ENCODE measurements at regions of chr6 and their contacts with region 1.

Region 1: GRCh38 chr6:156848533-156848932 is 71.4 kb downstream of the ARID1B start:
- DNase-seq: peak; percentile 85 to 91 (median 88)
- ATAC-seq: peak; percentile 82 to 91 (median 84)
- H3K4me3 ChIP-seq: peak overlapping the region in 4 of 12 donors; percentile 1 to 15 (median 8)
- H3K27ac ChIP-seq: peak overlapping the region; percentile 7 to 77 (median 64)
- H3K4me1 ChIP-seq: peaks cover 16 to 100% (median 90%) of the 10 kb centered on the region in 12 donors
- H3K27me3 ChIP-seq: no peaks in the 10 kb centered on the region
- CTCF ChIP-seq: no peak
- POLR2A ChIP-seq: no peak

Region 2: DNA sequence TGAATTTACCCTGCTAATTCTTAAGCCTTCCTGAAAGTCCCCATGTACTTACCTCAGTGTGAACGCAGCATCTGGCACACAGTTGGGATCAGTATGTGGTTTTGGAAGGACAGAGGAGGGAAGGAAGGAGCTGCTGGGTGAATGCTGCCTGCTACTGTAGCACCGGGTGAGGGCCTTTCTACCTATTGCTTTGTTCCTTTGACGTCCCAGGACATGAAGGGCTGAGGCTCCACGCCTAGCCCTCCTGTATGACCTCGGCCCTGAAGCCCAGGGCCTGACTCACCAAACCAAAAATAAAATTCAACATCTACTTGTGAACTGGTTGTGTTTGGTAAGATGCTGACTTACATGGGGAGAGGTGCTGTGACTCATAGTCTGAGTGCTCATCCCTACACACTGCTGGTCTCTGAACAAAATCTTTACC is 20.2 kb before region 1 on chr6:
- intact Hi-C with region 1: loop called in 1 of 10 experiments (anchors 2 kb)
- DNase-seq: peak in 2 of 5 donors; percentile 39 to 62
- ATAC-seq: peak; percentile 78 to 93 (median 86)
- H3K4me3 ChIP-seq: no peak overlapping the region
- H3K27ac ChIP-seq: peak overlapping the region; percentile 24 to 76 (median 60)
- H3K4me1 ChIP-seq: peaks cover 0 to 85% (median 59%) of the 10 kb centered on the region in 12 donors
- H3K27me3 ChIP-seq: no peaks in the 10 kb centered on the region
- CTCF ChIP-seq: no peak
- POLR2A ChIP-seq: no peak

Region 3: GRCh38 chr6:156886409-156886808 is 37.9 kb after region 1 on chr6:
- intact Hi-C with region 1: loop called in 1 of 10 experiments (anchors 5 kb)
- DNase-seq: peak in 3 of 5 donors; percentile 42 to 54 (median 45)
- ATAC-seq: peak; percentile 29 to 72 (median 66)
- H3K4me3 ChIP-seq: no peak overlapping the region
- H3K27ac ChIP-seq: peak overlapping the region in 11 of 12 donors; percentile 6 to 54 (median 30)
- H3K4me1 ChIP-seq: peaks cover 8 to 93% (median 75%) of the 10 kb centered on the region in 12 donors
- H3K27me3 ChIP-seq: no peaks in the 10 kb centered on the region
- CTCF ChIP-seq: no peak
- POLR2A ChIP-seq: no peak

Region 4: GRCh38 chr6:157158897-157159296 is 310.4 kb after region 1 on chr6:
- intact Hi-C with region 1: no loop called
- DNase-seq: no peak
- ATAC-seq: peak in 1 of 4 donors; percentile 34
- H3K4me3 ChIP-seq: no peak overlapping the region
- H3K27ac ChIP-seq: no peak overlapping the region
- H3K4me1 ChIP-seq: peaks cover 0 to 21% (median 1%) of the 10 kb centered on the region in 12 donors
- H3K27me3 ChIP-seq: no peaks in the 10 kb centered on the region
- CTCF ChIP-seq: peak in 1 of 12 donors; percentile 9
- POLR2A ChIP-seq: no peak

Measured in heart left ventricle (tissue), 16 donors.